Activated CD4-positive, alpha-beta T cell treated with anti-CD3 and anti-CD28 coated beads for 36 hours (primary cell): ENCODE measurements at regions of chr14 and their contacts with region 1.

Region 1: GRCh38 chr14:98227000-98227726 is 1044.8 kb downstream of the BCL11B start:
- DNase-seq: peak; percentile 75
- ATAC-seq: peak; percentile 70
- H3K4me3 Mint-ChIP-seq: peak overlapping the region; percentile 45
- H3K27ac Mint-ChIP-seq: peak overlapping the region; percentile 95
- H3K4me1 Mint-ChIP-seq: peaks cover 88% of the 10 kb centered on the region
- H3K27me3 Mint-ChIP-seq: no peaks in the 10 kb centered on the region

Region 2: DNA sequence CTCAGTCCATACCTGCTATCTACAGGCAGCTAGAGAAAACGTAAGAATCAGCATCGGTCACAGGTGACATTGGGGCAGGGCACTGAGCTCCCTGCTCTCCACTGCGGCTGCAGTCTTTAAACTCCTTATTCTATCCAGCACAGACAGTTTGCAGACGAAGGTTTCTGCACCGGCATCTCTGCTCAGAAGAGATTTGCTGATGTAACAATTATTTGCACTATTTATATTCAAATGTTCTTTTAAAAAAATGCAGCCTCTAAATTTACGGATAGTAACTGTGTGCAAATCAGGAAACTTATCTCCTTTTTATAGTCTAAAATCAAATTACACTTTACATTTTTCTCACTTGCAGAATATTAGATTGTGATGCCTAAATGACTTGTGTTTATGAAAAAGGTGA is 758.9 kb before region 1 on chr14:
- CTCF ChIA-PET with region 1: no interaction called
- POLR2A ChIA-PET with region 1: no interaction called
- intact Hi-C with region 1: no loop called
- DNase-seq: no peak
- ATAC-seq: no peak
- H3K4me3 Mint-ChIP-seq: no peak overlapping the region
- H3K27ac Mint-ChIP-seq: no peak overlapping the region
- H3K4me1 Mint-ChIP-seq: peaks cover 8% of the 10 kb centered on the region
- H3K27me3 Mint-ChIP-seq: no peaks in the 10 kb centered on the region

Region 3: GRCh38 chr14:97707603-97708002 is 519.6 kb before region 1 on chr14:
- CTCF ChIA-PET with region 1: no interaction called
- POLR2A ChIA-PET with region 1: no interaction called
- intact Hi-C with region 1: loop called in 1 of 2 experiments (anchors 10 kb)
- DNase-seq: peak; percentile 39
- ATAC-seq: peak; percentile 32
- H3K4me3 Mint-ChIP-seq: no peak overlapping the region
- H3K27ac Mint-ChIP-seq: no peak overlapping the region
- H3K4me1 Mint-ChIP-seq: peaks cover 96% of the 10 kb centered on the region
- H3K27me3 Mint-ChIP-seq: no peaks in the 10 kb centered on the region

Region 4: DNA sequence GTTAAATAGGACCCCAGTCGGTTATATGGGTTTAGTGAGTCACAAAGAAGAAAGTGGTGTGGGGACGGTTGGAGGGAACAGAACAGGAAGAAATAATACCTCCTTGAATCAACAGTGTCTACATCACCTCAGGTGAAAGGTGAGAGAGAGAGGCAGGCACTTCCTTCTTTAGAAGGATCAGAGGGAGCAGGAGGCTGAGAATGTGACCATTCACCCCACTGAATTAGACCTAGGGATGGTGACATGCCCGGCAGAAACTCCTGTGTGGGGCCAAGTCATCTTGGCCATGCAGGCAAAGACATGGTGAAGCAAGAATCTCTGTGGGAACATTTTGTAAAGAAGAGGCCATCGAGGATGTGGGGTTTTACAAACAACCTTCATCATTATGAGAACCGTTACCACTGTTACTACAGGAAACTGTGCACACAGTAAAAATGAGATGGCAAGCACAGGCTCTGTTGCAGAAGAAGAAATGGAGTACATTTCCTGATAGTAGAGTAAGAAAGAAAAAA is 233.1 kb before region 1 on chr14:
- CTCF ChIA-PET with region 1: no interaction called
- POLR2A ChIA-PET with region 1: no interaction called
- intact Hi-C with region 1: loop called in 1 of 2 experiments (anchors 5 kb)
- DNase-seq: peak; percentile 52
- ATAC-seq: peak; percentile 81
- H3K4me3 Mint-ChIP-seq: peak overlapping the region; percentile 18
- H3K27ac Mint-ChIP-seq: peak overlapping the region; percentile 94
- H3K4me1 Mint-ChIP-seq: peaks cover 71% of the 10 kb centered on the region
- H3K27me3 Mint-ChIP-seq: no peaks in the 10 kb centered on the region

Region 5: GRCh38 chr14:98173305-98173704 is 53.9 kb before region 1 on chr14:
- CTCF ChIA-PET with region 1: interaction called, 9 read pairs
- POLR2A ChIA-PET with region 1: interaction called, 9 read pairs
- intact Hi-C with region 1: loop called in 1 of 2 experiments (anchors 2 kb)
- DNase-seq: peak; percentile 70
- ATAC-seq: no peak
- H3K4me3 Mint-ChIP-seq: peak overlapping the region; percentile 50
- H3K27ac Mint-ChIP-seq: peak overlapping the region; percentile 99
- H3K4me1 Mint-ChIP-seq: peaks cover 99% of the 10 kb centered on the region
- H3K27me3 Mint-ChIP-seq: no peaks in the 10 kb centered on the region

Region 6: DNA sequence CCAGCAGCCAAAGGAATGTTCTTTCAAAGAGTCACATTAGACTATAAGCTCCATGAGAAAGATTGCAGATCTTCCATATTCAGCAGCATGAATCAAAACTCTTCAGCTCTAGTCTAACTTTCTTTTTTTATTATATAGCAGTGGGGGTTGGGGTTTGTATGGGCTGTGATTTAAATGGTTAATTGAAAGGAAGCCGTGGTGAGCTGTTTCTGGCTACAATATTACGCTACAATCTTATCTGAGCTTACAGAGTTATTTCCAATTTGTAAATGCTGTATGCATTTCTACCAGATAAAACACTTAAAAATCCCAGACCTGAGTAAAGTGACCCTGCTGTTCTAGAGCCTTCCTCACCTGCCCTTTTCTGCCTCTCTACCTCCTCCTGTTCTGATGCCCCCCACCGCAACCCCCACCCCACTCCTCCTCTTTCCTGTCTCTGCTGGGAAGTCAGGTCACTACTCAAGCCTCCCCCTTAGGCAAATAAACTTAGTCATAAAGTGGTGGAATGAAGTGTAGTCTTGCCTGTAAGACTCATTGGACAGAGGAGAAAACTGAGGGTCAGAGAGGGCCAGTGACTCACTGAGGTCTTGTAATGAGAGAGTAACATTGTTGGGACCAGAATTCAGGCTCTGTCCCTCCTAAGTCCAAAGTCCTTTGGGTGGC is 44.6 kb before region 1 on chr14:
- CTCF ChIA-PET with region 1: interaction called, 4 read pairs
- POLR2A ChIA-PET with region 1: interaction called, 7 read pairs
- intact Hi-C with region 1: loop called (anchors 2 kb)
- DNase-seq: peak; percentile 86
- ATAC-seq: peak; percentile 74
- H3K4me3 Mint-ChIP-seq: peak overlapping the region; percentile 35
- H3K27ac Mint-ChIP-seq: peak overlapping the region; percentile 100
- H3K4me1 Mint-ChIP-seq: peaks cover 96% of the 10 kb centered on the region
- H3K27me3 Mint-ChIP-seq: no peaks in the 10 kb centered on the region